HEK293 (cell line): ENCODE measurements at regions of chr14 and their contacts with region 1.

Region 1: GRCh38 chr14:64478634-64479250 is 13.4 kb downstream of the AKAP5 start:
- H3K4me3 ChIP-seq: no peak overlapping the region
- H3K27ac ChIP-seq: no peak overlapping the region
- H3K4me1 ChIP-seq: peaks cover 6% of the 10 kb centered on the region; the same call in 1 of the 2 replicates
- CTCF ChIP-seq: no peak

Region 2: GRCh38 chr14:64324895-64325294 is 153.8 kb before region 1 on chr14:
- CTCF ChIA-PET with region 1: no interaction called
- POLR2A ChIA-PET with region 1: no interaction called
- H3K4me3 ChIP-seq: no peak overlapping the region
- H3K27ac ChIP-seq: no peak overlapping the region
- H3K4me1 ChIP-seq: peaks cover 4% of the 10 kb centered on the region
- CTCF ChIP-seq: no peak

Region 3: DNA sequence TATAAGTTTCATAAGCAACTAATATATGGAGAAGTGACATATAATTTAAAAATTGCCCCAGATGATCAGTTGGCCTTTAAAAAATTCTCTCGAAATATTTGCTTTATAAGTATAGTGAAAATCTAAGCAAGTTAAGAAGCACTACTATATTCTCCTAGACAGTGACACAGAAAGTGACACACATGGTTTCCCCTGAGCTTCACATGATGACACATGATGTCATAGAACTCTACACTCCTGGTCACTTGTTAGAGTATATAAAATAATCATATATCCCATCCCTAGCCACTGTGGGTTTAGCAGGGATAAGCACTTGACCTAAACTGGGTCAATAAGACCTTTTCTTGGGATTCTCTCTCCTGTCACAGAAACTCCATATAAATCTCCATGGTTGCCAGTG is 133.2 kb before region 1 on chr14:
- CTCF ChIA-PET with region 1: interaction called, 24 read pairs
- POLR2A ChIA-PET with region 1: no interaction called
- H3K4me3 ChIP-seq: no peak overlapping the region
- H3K27ac ChIP-seq: no peak overlapping the region
- H3K4me1 ChIP-seq: no peaks in the 10 kb centered on the region
- CTCF ChIP-seq: no peak

Region 4: GRCh38 chr14:64465191-64465822 is 13.4 kb before region 1 on chr14 and contains the start of gene AKAP5:
- CTCF ChIA-PET with region 1: interaction called, 10 read pairs
- POLR2A ChIA-PET with region 1: interaction called, 5 read pairs
- H3K4me3 ChIP-seq: peak within 1 kb of the TSS; percentile 56
- H3K27ac ChIP-seq: peak within 1 kb of the TSS; percentile 3; the same call in 1 of the 2 replicates
- H3K4me1 ChIP-seq: peaks cover 10% of the 10 kb centered on the region; the same call in 1 of the 2 replicates
- CTCF ChIP-seq: no peak